CD4-positive, alpha-beta memory T cell (primary cell): ENCODE measurements at regions of chr12 and their contacts with region 1.

Region 1: GRCh38 chr12:122951979-122952892 is 14.0 kb downstream of the ABCB9 start:
- DNase-seq: peak; percentile 62 to 69 (median 65)
- H3K4me3 ChIP-seq: no peak overlapping the region
- H3K4me3 Mint-ChIP-seq: no peak overlapping the region
- H3K27ac ChIP-seq: no peak overlapping the region
- H3K27ac Mint-ChIP-seq: peak overlapping the region in 4 of 7 donors; percentile 7 to 37 (median 16)
- H3K4me1 ChIP-seq: peaks cover 6% of the 10 kb centered on the region
- H3K4me1 Mint-ChIP-seq: peaks cover 1 to 6% (median 3%) of the 10 kb centered on the region in 4 donors
- H3K27me3 ChIP-seq: no peaks in the 10 kb centered on the region
- H3K27me3 Mint-ChIP-seq: no peaks in the 10 kb centered on the region

Region 2: GRCh38 chr12:122793685-122794106 is 158.5 kb before region 1 on chr12:
- CTCF ChIA-PET with region 1: interaction called, 44 read pairs
- POLR2A ChIA-PET with region 1: no interaction called
- intact Hi-C with region 1: loop called (anchors 1 kb)
- DNase-seq: peak in 4 of 5 donors; percentile 55 to 60 (median 58)
- H3K4me3 ChIP-seq: no peak overlapping the region
- H3K4me3 Mint-ChIP-seq: peak overlapping the region in 1 of 8 donors; percentile 29
- H3K27ac ChIP-seq: no peak overlapping the region
- H3K27ac Mint-ChIP-seq: no peak overlapping the region
- H3K4me1 ChIP-seq: peaks cover 3% of the 10 kb centered on the region
- H3K4me1 Mint-ChIP-seq: peaks cover 0 to 5% (median 4%) of the 10 kb centered on the region in 4 donors
- H3K27me3 ChIP-seq: no peaks in the 10 kb centered on the region
- H3K27me3 Mint-ChIP-seq: no peaks in the 10 kb centered on the region

Region 3: GRCh38 chr12:122871851-122872780 is 80.1 kb before region 1 on chr12:
- CTCF ChIA-PET with region 1: interaction called, 20 read pairs
- POLR2A ChIA-PET with region 1: interaction called, 4 read pairs
- intact Hi-C with region 1: no loop called
- DNase-seq: peak in 3 of 5 donors; percentile 34 to 40 (median 39)
- H3K4me3 ChIP-seq: peak overlapping the region; percentile 25 to 41
- H3K4me3 Mint-ChIP-seq: peak overlapping the region; percentile 84 to 94 (median 91)
- H3K27ac ChIP-seq: peak overlapping the region; percentile 47
- H3K27ac Mint-ChIP-seq: peak overlapping the region; percentile 62 to 97 (median 94)
- H3K4me1 ChIP-seq: peaks cover 70% of the 10 kb centered on the region
- H3K4me1 Mint-ChIP-seq: peaks cover 48 to 82% (median 63%) of the 10 kb centered on the region in 4 donors
- H3K27me3 ChIP-seq: no peaks in the 10 kb centered on the region
- H3K27me3 Mint-ChIP-seq: no peaks in the 10 kb centered on the region

Region 4: GRCh38 chr12:122880668-122881067 is 71.6 kb before region 1 on chr12:
- CTCF ChIA-PET with region 1: interaction called, 12 read pairs
- POLR2A ChIA-PET with region 1: no interaction called
- intact Hi-C with region 1: no loop called
- DNase-seq: no peak
- H3K4me3 ChIP-seq: no peak overlapping the region
- H3K4me3 Mint-ChIP-seq: peak overlapping the region in 3 of 8 donors; percentile 11 to 27 (median 20)
- H3K27ac ChIP-seq: no peak overlapping the region
- H3K27ac Mint-ChIP-seq: peak overlapping the region; percentile 41 to 87 (median 80)
- H3K4me1 ChIP-seq: peaks cover 86% of the 10 kb centered on the region
- H3K4me1 Mint-ChIP-seq: peaks cover 51 to 94% (median 74%) of the 10 kb centered on the region in 4 donors
- H3K27me3 ChIP-seq: no peaks in the 10 kb centered on the region
- H3K27me3 Mint-ChIP-seq: no peaks in the 10 kb centered on the region

Region 5: GRCh38 chr12:122895705-122896636 is 56.3 kb before region 1 on chr12 and contains the start of gene VPS37B:
- CTCF ChIA-PET with region 1: interaction called, 30 read pairs
- POLR2A ChIA-PET with region 1: interaction called, 3 read pairs
- intact Hi-C with region 1: loop called (anchors 5 kb)
- DNase-seq: peak; percentile 91 to 96 (median 93)
- H3K4me3 ChIP-seq: peak within 1 kb of the TSS; percentile 54 to 79
- H3K4me3 Mint-ChIP-seq: peak within 1 kb of the TSS; percentile 88 to 97 (median 92)
- H3K27ac ChIP-seq: peak within 1 kb of the TSS; percentile 86
- H3K27ac Mint-ChIP-seq: peak within 1 kb of the TSS; percentile 93 to 100 (median 100)
- H3K4me1 ChIP-seq: peaks cover 89% of the 10 kb centered on the region
- H3K4me1 Mint-ChIP-seq: peaks cover 60 to 92% (median 78%) of the 10 kb centered on the region in 4 donors
- H3K27me3 ChIP-seq: no peaks in the 10 kb centered on the region
- H3K27me3 Mint-ChIP-seq: no peaks in the 10 kb centered on the region
- total RNA-seq, gene VPS37B: 22.8 to 23.7 TPM